ENCODE measurements at regions of chr7 and their contacts with region 1.

Region 1: DNA sequence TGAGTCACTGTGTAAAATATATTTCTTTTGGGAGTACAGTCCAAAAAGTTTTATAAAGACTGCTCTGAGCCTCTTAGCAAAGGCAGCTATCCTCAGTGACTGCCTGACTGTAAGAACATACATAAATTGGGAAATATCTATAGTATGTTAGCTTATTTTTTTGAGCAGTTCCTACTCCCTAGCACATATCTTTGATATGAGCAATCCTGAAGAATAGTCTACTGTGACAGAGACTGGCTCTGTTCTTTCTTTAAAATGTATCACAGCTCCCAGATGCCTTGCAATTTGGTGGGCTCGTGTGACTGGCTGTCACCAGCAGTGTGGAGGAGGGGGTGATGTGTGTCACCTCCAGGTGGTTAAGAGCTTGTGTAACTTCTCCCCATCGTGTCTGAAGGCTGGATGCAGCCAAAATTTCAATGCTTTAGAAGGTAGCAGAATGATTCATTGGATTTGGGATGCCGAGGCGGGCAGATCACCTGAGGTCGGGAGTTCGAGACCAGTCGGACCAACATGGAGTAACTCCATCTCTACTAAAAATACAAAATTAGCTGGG is 47.9 kb downstream of the MTERF1 start:
- DNase-seq: no peak
- ATAC-seq: no peak
- H3K4me3 ChIP-seq: no peak overlapping the region
- H3K27ac ChIP-seq: no peak overlapping the region
- H3K4me1 ChIP-seq: peaks cover 0 to 8% (median 0%) of the 10 kb centered on the region in 12 donors
- H3K27me3 ChIP-seq: no peaks in the 10 kb centered on the region
- CTCF ChIP-seq: no peak
- POLR2A ChIP-seq: no peak

Region 2: GRCh38 chr7:91869661-91870060 is 37.1 kb after region 1 on chr7:
- intact Hi-C with region 1: loop called in 1 of 10 experiments (anchors 5 kb)
- DNase-seq: no peak
- ATAC-seq: no peak
- H3K4me3 ChIP-seq: no peak overlapping the region
- H3K27ac ChIP-seq: no peak overlapping the region
- H3K4me1 ChIP-seq: peaks cover 0 to 10% (median 1%) of the 10 kb centered on the region in 12 donors
- H3K27me3 ChIP-seq: no peaks in the 10 kb centered on the region
- CTCF ChIP-seq: no peak
- POLR2A ChIP-seq: no peak

Region 3: DNA sequence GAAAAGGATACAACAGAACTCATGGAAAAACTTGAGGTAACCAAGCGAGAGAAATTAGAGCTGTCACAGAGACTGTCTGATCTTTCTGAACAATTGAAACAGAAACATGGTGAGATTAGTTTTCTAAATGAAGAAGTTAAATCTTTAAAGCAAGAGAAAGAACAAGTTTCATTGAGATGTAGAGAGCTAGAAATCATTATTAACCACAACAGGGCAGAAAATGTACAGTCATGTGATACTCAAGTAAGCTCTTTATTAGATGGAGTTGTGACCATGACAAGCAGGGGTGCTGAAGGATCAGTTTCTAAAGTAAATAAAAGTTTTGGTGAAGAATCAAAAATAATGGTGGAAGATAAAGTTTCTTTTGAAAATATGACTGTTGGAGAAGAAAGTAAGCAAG is 170.2 kb after region 1 on chr7:
- intact Hi-C with region 1: no loop called
- DNase-seq: no peak
- ATAC-seq: no peak
- H3K4me3 ChIP-seq: no peak overlapping the region
- H3K27ac ChIP-seq: no peak overlapping the region
- H3K4me1 ChIP-seq: peaks cover 0 to 15% (median 0%) of the 10 kb centered on the region in 12 donors
- H3K27me3 ChIP-seq: no peaks in the 10 kb centered on the region
- CTCF ChIP-seq: no peak
- POLR2A ChIP-seq: no peak

Region 4: DNA sequence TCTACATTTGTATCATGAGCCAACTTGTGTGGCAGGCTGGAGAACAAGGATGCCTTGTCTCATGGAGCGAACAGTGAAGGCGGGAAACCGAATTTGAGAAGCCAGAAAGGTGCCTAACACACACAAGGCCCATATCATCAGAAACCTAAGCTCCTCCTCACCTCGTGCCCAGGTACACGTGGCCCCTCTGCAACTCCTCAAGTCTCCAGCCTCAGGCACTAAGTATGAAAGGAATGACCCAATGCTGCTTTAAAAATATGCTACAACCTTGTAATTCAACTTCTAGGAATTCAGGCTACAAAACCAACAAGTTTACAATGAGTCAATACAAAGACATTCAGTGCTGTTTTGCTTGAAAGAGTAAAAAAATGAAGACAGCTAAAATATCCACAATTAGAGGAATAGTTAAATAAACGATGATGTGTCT is 908.1 kb after region 1 on chr7:
- intact Hi-C with region 1: no loop called
- DNase-seq: no peak
- ATAC-seq: no peak
- H3K4me3 ChIP-seq: no peak overlapping the region
- H3K27ac ChIP-seq: no peak overlapping the region
- H3K4me1 ChIP-seq: peaks cover 0 to 22% (median 8%) of the 10 kb centered on the region in 12 donors
- H3K27me3 ChIP-seq: no peaks in the 10 kb centered on the region
- CTCF ChIP-seq: no peak
- POLR2A ChIP-seq: no peak